ENCODE measurements at regions of chr1 and their contacts with region 1.

Region 1: GRCh38 chr1:225474986-225475820 is 47.4 kb upstream of the LBR start:
- DNase-seq: peak; percentile 66
- ATAC-seq: peak; percentile 93
- H3K4me3 ChIP-seq: no peak overlapping the region
- H3K27ac ChIP-seq: peak overlapping the region; percentile 31; the same call in 1 of the 2 replicates
- H3K4me1 ChIP-seq: peaks cover 2% of the 10 kb centered on the region
- H3K27me3 ChIP-seq: peaks cover 2% of the 10 kb centered on the region; the same call in 1 of the 2 replicates
- CTCF ChIP-seq: peak; percentile 100; the same call in 1 of the 2 replicates
- POLR2A ChIP-seq: peak; percentile 74
- RAD21 ChIP-seq: peak; percentile 100

Region 2: DNA sequence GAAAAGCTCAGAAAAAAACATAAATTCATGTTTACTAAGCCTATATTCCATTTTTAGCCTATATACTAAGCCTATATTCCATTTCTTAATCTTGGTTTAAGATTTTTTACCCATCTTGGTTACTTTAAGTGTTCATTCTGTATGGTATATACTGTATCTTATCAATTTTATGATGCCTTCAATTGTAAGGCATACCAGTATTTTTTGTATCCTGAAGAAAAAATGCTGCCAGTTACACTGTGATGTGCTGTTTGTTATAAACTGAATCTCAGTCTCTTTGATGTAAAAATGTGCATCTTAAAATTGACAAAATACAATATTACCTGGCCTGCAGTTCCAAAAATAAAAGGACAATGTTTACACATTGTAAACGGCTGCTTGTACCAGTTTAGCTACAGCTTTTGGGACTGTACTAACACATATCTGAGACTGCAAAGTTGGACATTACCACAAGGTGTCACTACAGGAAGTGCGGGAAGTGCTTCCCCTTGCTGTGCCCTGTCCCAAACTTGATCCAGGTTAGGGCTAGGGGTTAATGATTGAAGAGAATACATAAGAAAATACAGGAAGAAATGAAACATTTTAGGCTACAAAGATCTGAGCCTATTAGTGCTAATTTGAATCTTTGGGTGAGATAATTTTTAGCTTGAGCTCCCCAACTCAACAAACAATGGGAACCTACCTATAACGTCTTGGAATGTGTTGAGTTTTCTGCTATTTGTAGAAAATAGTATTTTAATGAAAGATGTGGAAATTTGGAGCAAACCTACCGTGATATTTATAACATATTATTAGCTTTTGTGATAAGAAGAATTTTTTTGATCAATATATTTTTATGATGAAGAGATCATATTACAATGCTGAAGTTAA is 156.3 kb before region 1 on chr1:
- CTCF ChIA-PET with region 1: no interaction called
- POLR2A ChIA-PET with region 1: no interaction called
- dilution Hi-C with region 1: no loop called
- in situ Hi-C with region 1: no loop called
- intact Hi-C with region 1: no loop called
- DNase-seq: peak; percentile 36
- ATAC-seq: peak; percentile 94
- H3K4me3 ChIP-seq: no peak overlapping the region
- H3K27ac ChIP-seq: no peak overlapping the region
- H3K4me1 ChIP-seq: no peaks in the 10 kb centered on the region
- H3K27me3 ChIP-seq: no peaks in the 10 kb centered on the region
- CTCF ChIP-seq: peak; percentile 66
- POLR2A ChIP-seq: no peak
- RAD21 ChIP-seq: peak; percentile 58

Region 3: DNA sequence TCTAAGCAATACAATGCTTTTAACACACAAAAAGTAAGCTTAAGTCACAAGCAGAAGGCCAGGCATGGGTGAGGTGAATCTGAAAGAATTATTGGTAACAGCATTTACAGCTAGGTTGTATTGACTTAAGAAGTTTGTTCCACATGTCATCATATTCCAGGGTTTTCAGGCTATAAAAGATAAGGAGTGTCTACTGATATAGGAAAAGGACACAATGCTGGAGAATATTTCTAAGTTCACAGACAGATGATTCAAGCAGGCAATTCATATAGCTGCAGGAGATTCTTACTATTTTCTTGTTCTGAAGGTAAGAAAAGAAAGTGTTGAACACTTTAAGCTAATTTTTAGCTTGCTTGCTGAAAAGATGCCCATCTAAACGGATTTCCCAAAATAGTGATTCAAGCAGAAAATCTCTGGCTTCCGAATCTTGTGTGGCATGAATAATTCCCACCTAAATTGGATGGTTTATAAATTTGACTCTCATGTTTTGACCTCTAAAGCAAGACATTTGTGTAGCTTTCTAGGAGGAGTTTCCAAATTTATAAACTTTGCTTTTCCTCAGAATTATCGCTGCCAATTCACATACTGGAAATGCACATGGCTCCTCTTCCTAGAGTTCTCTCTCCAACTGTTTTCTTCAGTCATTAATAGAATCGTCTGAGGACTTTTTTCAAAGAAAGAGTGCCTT is 48.2 kb after region 1 on chr1:
- CTCF ChIA-PET with region 1: interaction called, 14 read pairs
- POLR2A ChIA-PET with region 1: no interaction called
- dilution Hi-C with region 1: no loop called
- in situ Hi-C with region 1: no loop called
- intact Hi-C with region 1: no loop called
- DNase-seq: no peak
- ATAC-seq: no peak
- H3K4me3 ChIP-seq: no peak overlapping the region
- H3K27ac ChIP-seq: no peak overlapping the region
- H3K4me1 ChIP-seq: peaks cover 10% of the 10 kb centered on the region
- H3K27me3 ChIP-seq: no peaks in the 10 kb centered on the region
- CTCF ChIP-seq: no peak
- POLR2A ChIP-seq: no peak
- RAD21 ChIP-seq: no peak

Region 4: DNA sequence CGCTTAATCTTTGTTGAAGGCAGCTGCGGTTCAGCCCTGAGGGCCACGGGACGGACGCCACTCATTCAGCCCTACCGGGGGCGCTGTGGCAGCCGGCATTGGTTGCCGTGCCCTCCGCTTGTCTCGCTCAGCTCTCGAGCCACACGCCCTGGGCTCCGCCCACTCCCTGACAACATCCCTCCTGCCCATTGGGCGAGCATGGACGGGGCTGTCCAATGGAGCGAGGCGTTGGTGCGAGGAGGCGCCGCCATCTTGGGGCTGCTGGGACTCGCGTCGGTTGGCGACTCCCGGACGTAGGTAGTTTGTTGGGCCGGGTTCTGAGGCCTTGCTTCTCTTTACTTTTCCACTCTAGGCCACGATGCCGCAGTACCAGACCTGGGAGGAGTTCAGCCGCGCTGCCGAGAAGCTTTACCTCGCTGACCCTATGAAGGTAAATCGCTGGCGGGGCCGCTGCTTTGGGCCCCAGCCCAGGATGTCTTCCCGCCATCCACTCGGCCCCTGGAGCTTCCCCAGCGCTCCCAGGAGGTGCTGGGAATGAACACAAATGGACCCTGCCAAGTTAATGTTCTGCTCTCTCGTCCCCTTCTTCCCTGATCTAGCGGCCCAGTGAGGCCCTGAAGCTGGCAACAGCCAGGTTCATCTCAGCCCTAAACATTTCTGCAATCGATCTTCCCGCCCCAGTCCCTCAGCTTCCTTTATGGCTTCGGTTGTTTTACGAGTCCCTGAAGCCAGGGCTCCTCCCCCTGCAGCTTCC is 302.6 kb after region 1 on chr1 and contains the start of gene SRP9:
- CTCF ChIA-PET with region 1: interaction called, 23 read pairs
- POLR2A ChIA-PET with region 1: no interaction called
- dilution Hi-C with region 1: no loop called
- in situ Hi-C with region 1: loop called (anchors 5 kb)
- intact Hi-C with region 1: loop called (anchors 1 kb)
- DNase-seq: peak; percentile 98
- ATAC-seq: peak; percentile 98
- H3K4me3 ChIP-seq: peak within 1 kb of the TSS; percentile 88
- H3K27ac ChIP-seq: peak within 1 kb of the TSS; percentile 96
- H3K4me1 ChIP-seq: peaks cover 2% of the 10 kb centered on the region; the same call in 1 of the 2 replicates
- H3K27me3 ChIP-seq: no peaks in the 10 kb centered on the region
- CTCF ChIP-seq: peak; percentile 94
- POLR2A ChIP-seq: peak; percentile 76
- RAD21 ChIP-seq: peak; percentile 79
- total RNA-seq, gene SRP9: 230 and 484 TPM in 2 replicates

Region 5: GRCh38 chr1:225911191-225912130 is 436.3 kb after region 1 on chr1:
- CTCF ChIA-PET with region 1: interaction called, 11 read pairs
- POLR2A ChIA-PET with region 1: interaction called, 3 read pairs
- dilution Hi-C with region 1: no loop called
- in situ Hi-C with region 1: loop called (anchors 5 kb)
- intact Hi-C with region 1: loop called (anchors 1 kb)
- DNase-seq: peak; percentile 17
- ATAC-seq: peak; percentile 95
- H3K4me3 ChIP-seq: no peak overlapping the region
- H3K27ac ChIP-seq: no peak overlapping the region
- H3K4me1 ChIP-seq: peaks cover 1% of the 10 kb centered on the region; the same call in 1 of the 2 replicates
- H3K27me3 ChIP-seq: no peaks in the 10 kb centered on the region
- CTCF ChIP-seq: peak; percentile 70
- POLR2A ChIP-seq: no peak
- RAD21 ChIP-seq: peak; percentile 74

Region 6: DNA sequence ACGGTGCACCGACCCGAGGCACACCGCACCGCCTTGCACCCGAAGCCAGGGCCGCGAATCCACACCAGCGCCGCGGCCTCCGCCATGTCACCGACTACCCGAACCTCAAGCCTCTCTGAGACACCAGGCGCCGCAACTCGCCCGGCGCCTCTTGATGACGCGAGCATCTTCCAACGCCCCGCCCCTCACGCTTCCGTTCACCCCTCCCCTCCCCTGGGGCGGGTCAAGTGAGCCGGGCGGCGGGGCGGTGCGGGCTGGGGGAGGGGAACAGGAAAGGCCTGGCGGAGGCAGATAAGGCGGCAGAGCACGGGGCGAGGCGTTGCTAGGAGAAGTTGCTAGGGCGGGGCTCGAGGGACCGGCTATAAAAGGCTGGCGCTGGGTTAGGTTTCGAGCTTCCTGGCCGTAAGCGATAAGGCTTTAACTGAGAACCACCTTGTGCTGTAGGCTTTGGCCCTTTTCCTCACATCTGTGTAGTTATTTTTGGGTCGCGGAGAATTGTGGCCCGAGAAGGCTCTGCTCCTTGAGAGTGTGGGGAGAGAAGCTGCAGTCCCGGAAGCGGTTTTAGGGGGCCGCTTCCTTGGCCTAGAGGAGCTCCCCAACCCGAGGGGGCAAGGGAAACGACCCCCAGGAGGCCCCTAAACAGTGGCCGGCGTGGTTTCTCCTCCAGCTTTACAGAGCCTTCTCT is 524.2 kb after region 1 on chr1 and contains the start of gene SDE2:
- CTCF ChIA-PET with region 1: interaction called, 3 read pairs
- POLR2A ChIA-PET with region 1: no interaction called
- dilution Hi-C with region 1: loop called (anchors 25 kb)
- in situ Hi-C with region 1: no loop called
- intact Hi-C with region 1: no loop called
- DNase-seq: peak; percentile 98
- ATAC-seq: peak; percentile 100
- H3K4me3 ChIP-seq: peak within 1 kb of the TSS; percentile 92
- H3K27ac ChIP-seq: peak within 1 kb of the TSS; percentile 93
- H3K4me1 ChIP-seq: peaks cover 7% of the 10 kb centered on the region; the same call in 1 of the 2 replicates
- H3K27me3 ChIP-seq: no peaks in the 10 kb centered on the region
- CTCF ChIP-seq: no peak
- POLR2A ChIP-seq: peak; percentile 97
- RAD21 ChIP-seq: no peak
- total RNA-seq, gene SDE2: 14.7 and 29.4 TPM in 2 replicates